ENCODE measurements at regions of chr20 and their contacts with region 1.

Region 1: DNA sequence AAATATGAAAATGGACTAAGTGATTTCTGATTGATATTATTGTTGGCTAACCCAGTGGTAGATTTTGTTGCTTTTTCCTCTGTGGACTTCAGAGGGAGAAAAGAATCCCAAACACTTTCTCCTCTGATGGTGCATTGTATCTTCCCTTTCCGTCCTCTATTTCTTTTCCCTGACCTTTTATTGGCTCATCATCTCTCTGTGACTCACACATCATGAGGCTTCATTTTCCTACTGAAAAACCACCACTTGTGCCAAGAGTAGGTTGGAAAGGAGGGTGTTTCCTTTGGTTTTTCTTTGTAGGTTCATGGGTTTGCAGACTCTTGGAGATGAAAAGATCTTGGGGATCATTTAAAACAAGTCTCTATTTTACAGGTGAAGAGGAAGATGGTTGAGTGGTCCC is 311.7 kb upstream of the JAG1 start:
- DNase-seq: peak; percentile 92

Region 2: DNA sequence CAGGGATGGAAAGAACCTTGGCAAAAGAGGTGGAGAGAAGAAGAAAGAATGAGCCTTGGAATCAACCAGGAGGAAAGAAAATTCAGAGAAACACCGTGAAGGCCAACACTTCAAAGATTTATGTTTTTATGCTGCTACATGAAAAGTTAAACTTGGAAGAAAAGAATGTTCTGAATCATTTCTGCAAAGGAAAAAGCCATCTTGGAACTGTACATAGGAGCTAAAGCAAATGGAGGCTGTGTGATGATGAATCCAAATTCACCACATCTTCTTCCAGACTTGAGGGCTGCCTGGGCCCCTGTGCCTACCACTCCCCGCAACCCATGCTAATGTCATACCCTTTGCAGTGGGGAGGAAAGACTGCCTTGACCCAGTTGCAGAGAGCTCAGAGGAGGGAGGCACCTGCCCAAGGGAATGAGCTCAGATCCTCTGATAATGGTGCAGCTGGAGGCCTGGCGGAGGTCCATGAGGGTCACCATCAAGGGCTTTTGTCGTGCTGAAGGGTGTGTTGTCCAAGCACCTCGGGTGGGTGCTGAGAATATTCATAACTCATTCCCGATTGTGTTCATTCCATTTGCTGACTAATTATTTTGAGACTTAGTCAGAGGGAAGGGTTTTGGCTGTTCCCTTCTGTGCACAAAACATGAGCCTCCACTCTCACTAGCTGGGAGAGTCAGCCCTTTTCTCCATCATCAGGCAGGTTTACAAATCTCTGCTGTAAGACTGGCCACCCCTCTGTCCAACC is 66.0 kb before region 1 on chr20:
- in situ Hi-C with region 1: loop called (anchors 5 kb)
- DNase-seq: no peak

Region 3: DNA sequence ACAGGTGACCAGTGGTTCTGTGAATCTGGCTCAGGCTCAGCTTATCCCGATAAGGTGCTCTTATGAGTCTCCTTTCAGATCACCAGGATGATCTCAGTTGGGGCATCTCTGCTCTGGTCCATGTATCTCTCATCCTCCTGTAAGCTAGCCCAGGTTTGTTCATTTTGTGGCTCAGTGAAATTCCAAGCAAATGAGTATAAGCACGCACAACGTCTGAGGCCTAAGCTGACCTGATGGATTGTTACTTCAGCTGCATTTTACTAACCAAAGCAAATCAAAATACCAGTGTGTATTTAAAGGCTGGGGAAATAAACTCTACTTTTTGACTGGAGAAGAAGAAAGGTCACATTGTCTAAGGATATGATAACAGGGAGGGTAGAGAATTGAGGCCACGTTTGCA is 381.1 kb after region 1 on chr20:
- in situ Hi-C with region 1: no loop called
- DNase-seq: no peak

Measured in SK-MEL-5 (cell line).